Caco-2 (cell line): ENCODE measurements at regions of chr9 and their contacts with region 1.

Region 1: GRCh38 chr9:7266911-7267595 is 509.3 kb downstream of the KDM4C start:
- DNase-seq: no peak
- H3K4me3 ChIP-seq: no peak overlapping the region
- H3K4me3 Mint-ChIP-seq: no peak overlapping the region
- H3K27ac Mint-ChIP-seq: no peak overlapping the region
- H3K4me1 ChIP-seq: no peaks in the 10 kb centered on the region
- H3K4me1 Mint-ChIP-seq: no peaks in the 10 kb centered on the region
- H3K27me3 ChIP-seq: no peaks in the 10 kb centered on the region; the same call in 1 of the 2 replicates
- H3K27me3 Mint-ChIP-seq: peaks cover 22% of the 10 kb centered on the region
- CTCF ChIP-seq: no peak

Region 2: GRCh38 chr9:7055201-7055903 is 211.7 kb before region 1 on chr9:
- CTCF ChIA-PET with region 1: no interaction called
- POLR2A ChIA-PET with region 1: no interaction called
- intact Hi-C with region 1: loop called (anchors 10 kb)
- DNase-seq: no peak
- H3K4me3 ChIP-seq: no peak overlapping the region
- H3K4me3 Mint-ChIP-seq: no peak overlapping the region
- H3K27ac Mint-ChIP-seq: no peak overlapping the region
- H3K4me1 ChIP-seq: no peaks in the 10 kb centered on the region
- H3K4me1 Mint-ChIP-seq: no peaks in the 10 kb centered on the region
- H3K27me3 ChIP-seq: no peaks in the 10 kb centered on the region
- H3K27me3 Mint-ChIP-seq: no peaks in the 10 kb centered on the region
- CTCF ChIP-seq: no peak

Region 3: DNA sequence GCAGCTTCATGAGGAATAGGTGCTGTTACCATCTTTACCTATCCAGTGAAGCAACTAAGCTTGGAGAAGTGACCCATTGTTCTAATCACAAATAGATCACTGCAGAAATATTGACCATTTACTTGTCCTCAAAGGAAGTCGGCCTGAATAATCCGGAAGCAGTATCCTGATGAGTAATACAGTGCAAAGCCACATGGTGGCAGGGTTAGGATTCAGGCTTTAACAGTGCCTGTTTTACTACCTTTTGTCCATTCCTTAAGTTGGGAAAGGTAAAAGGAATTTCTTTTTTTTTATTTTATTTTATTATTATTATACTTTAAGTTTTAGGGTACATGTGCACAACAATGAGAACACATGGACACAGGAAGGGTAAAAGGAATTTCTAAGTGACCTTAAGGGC is 173.0 kb before region 1 on chr9:
- CTCF ChIA-PET with region 1: no interaction called
- POLR2A ChIA-PET with region 1: no interaction called
- intact Hi-C with region 1: loop called (anchors 10 kb)
- DNase-seq: peak in 1 of 2 experiments; percentile 4
- H3K4me3 ChIP-seq: no peak overlapping the region
- H3K4me3 Mint-ChIP-seq: no peak overlapping the region
- H3K27ac Mint-ChIP-seq: no peak overlapping the region
- H3K4me1 ChIP-seq: no peaks in the 10 kb centered on the region
- H3K4me1 Mint-ChIP-seq: no peaks in the 10 kb centered on the region
- H3K27me3 ChIP-seq: no peaks in the 10 kb centered on the region
- H3K27me3 Mint-ChIP-seq: no peaks in the 10 kb centered on the region
- CTCF ChIP-seq: peak in 1 of 2 experiments; percentile 19